ENCODE measurements at regions of chr19 and their contacts with region 1.

Region 1: DNA sequence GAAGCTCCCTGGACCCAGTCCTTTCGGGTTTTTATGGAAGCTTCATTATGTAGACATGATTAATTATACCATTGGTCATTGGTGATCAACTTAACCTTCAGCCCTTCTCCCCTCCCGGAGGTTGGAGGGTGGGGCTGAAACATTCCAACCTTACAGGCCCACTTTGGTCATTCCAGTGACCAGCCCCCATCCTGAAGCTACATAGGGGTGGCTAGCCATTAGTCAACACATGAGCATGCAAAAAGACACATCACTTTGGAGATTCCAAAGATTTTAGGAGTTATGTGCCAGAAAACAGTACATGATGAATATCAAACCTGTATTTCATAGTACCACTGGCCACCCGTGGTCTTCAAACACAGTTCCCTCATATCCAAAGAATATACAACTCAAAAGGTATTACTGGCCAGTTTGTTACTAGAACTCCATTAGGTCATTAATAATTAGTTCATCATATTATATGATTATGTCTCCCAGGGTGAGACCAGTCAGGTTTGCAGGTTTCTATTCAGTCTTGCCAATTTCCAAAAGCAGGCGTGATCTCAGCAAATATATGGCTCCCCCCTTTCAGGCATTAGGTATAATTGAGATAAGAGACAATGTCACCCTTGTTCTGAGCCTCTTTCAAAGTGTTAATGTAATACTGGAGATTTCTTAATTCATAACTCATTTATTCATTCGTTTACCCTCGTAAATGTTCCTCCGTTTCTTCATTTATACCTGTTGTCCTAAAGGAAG is 11.1 kb downstream of the PPP5C start:
- DNase-seq: no peak
- H3K4me3 Mint-ChIP-seq: no peak overlapping the region
- H3K27ac Mint-ChIP-seq: no peak overlapping the region
- H3K4me1 Mint-ChIP-seq: peaks cover 25% of the 10 kb centered on the region
- H3K27me3 Mint-ChIP-seq: no peaks in the 10 kb centered on the region

Region 2: DNA sequence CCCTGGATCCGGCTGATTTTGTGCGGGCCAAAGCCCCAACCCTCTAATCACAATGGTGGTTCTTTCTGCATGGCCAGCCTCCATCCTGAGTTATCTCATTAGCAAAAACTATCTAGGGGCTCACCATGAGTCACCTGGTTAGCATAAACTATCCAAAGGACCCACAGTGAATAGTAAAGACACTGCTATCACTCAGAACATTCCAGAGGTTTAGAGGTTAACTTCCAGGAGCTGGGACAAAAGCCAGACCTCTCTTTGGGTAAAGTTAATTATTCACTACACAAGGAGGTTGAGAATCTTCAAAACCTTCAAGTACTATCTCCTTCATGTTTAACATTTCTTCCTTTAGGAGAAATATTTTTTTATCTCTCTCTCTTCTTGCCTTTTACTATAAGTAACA is 29.9 kb before region 1 on chr19:
- CTCF ChIA-PET with region 1: no interaction called
- POLR2A ChIA-PET with region 1: no interaction called
- intact Hi-C with region 1: no loop called
- DNase-seq: no peak
- H3K4me3 Mint-ChIP-seq: no peak overlapping the region
- H3K27ac Mint-ChIP-seq: no peak overlapping the region
- H3K4me1 Mint-ChIP-seq: no peaks in the 10 kb centered on the region
- H3K27me3 Mint-ChIP-seq: peaks cover 2% of the 10 kb centered on the region

Region 3: DNA sequence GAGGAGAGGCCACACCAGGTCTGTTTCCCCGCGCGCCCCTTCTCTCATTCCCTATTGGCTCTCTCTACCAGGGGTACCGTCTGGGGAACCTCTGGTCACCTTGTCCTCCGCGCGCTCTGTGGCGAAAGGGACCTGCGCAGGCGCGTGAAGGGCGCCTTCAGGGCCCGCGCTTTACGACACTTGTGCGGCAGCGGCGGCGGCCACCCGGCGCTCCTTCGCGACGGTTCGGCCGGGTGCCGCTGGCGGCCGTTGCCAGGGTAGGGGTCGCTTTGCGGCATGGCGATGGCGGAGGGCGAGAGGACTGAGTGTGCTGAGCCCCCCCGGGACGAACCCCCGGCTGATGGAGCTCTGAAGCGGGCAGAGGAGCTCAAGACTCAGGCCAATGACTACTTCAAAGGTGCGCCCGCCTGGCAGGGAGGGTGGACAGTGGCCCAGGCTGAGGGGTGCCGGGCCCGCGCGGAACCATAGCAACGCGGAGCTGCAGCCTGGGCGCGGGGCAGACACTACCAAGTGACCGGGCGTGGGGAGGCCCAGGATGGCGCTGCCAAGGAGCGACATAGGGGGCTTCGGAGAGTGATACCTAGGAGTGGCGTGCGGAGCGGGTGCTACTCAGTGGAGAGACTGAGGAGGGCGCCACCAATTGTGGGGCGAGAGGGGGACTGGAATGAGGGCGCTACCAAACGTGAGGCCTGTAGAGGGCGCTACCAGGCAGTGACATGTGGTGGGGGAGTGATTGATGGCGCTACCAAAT is 11.0 kb before region 1 on chr19 and contains the start of gene PPP5C:
- CTCF ChIA-PET with region 1: interaction called, 10 read pairs
- POLR2A ChIA-PET with region 1: no interaction called
- intact Hi-C with region 1: no loop called
- DNase-seq: peak; percentile 93
- H3K4me3 Mint-ChIP-seq: peak within 1 kb of the TSS; percentile 94
- H3K27ac Mint-ChIP-seq: peak within 1 kb of the TSS; percentile 90
- H3K4me1 Mint-ChIP-seq: peaks cover 47% of the 10 kb centered on the region
- H3K27me3 Mint-ChIP-seq: no peaks in the 10 kb centered on the region
- total RNA-seq, gene PPP5C: 76.9 to 82.5 TPM